Left cardiac atrium (tissue), 4 donors: ENCODE measurements at regions of chr6 and their contacts with region 1.

Region 1: GRCh38 chr6:105484238-105485161 is 81.6 kb upstream of the PREP start:
- DNase-seq: no peak
- ATAC-seq: peak; percentile 39 to 58

Region 2: GRCh38 chr6:105077596-105078385 is 406.7 kb before region 1 on chr6:
- intact Hi-C with region 1: no loop called
- DNase-seq: no peak
- ATAC-seq: no peak

Region 3: GRCh38 chr6:105301072-105301503 is 183.4 kb before region 1 on chr6:
- intact Hi-C with region 1: no loop called
- DNase-seq: peak; percentile 26
- ATAC-seq: peak; percentile 91 to 92

Region 4: DNA sequence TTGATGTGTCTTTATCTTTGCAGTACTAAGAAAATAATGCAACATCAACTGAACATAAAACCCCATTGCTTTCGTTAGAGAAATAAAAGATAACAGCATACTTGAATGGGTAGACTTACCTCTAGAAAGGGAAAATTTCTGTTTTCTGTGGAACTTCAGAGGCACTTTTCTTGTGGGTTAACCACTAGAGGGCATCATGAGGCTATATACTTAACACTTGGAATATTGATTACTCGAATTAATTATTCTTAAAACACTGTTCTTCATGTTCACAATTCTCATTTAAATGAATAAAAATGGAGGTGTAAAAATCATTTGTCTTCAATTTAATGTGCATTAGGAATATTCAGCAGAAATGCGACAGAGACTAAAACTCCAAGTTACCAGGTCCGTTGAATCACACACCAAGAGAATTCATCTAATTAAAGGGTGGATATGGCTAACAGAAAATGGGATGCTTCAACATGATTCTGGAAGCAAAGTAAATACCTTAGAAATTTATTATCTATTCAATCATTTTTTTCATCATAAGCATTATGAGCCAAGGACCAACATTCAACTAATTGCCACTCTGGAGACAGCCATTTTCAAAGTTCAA is 249.2 kb after region 1 on chr6:
- intact Hi-C with region 1: loop called in 1 of 2 experiments (anchors 10 kb)
- DNase-seq: no peak
- ATAC-seq: no peak

Region 5: GRCh38 chr6:105992315-105992961 is 507.9 kb after region 1 on chr6:
- intact Hi-C with region 1: loop called in 1 of 2 experiments (anchors 5 kb)
- DNase-seq: peak; percentile 80
- ATAC-seq: peak; percentile 92 to 97

Region 6: DNA sequence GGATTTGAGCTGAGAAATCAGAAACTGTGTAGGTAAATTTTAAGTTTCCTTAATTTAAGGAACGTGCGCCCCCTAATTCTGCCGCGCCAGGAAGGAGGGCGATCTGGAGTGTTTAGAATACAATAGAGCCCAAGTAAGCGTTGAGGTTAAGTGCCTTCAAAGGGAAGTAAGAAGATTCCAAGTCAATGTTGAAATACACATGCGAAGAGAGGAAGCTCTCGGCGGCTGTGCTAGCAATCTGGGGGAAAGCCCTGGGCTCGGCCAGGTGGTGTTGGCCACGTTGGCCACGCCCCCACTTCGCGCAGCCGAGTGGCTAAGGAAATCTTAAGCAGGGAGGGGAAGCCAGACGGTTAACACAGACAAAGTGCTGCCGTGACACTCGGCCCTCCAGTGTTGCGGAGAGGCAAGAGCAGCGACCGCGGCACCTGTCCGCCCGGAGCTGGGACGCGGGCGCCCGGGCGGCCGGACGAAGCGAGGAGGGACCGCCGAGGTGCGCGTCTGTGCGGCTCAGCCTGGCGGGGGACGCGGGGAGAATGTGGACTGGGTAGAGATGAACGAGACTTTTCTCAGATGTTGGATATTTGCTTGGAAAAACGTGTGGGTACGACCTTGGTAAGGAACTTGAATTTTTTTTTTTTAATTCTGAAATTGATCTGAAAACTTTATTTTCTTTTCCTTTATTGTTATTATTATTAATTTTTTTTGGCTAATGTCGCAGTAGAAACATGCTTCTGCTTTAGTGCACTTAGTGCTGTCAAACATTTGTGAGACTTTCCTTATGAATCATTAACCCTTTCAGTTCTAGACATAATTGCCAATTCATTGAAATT is 601.7 kb after region 1 on chr6 and contains the start of gene PRDM1:
- intact Hi-C with region 1: loop called in 1 of 2 experiments (anchors 5 kb)
- DNase-seq: peak; percentile 74
- ATAC-seq: peak; percentile 73 to 82
- total RNA-seq, gene PRDM1: 1.1 to 2.3 TPM

Region 7: GRCh38 chr6:106223300-106223930 is 738.9 kb after region 1 on chr6:
- intact Hi-C with region 1: loop called in 1 of 2 experiments (anchors 5 kb)
- DNase-seq: peak; percentile 43
- ATAC-seq: peak in 1 of 2 donors; percentile 57

Region 8: DNA sequence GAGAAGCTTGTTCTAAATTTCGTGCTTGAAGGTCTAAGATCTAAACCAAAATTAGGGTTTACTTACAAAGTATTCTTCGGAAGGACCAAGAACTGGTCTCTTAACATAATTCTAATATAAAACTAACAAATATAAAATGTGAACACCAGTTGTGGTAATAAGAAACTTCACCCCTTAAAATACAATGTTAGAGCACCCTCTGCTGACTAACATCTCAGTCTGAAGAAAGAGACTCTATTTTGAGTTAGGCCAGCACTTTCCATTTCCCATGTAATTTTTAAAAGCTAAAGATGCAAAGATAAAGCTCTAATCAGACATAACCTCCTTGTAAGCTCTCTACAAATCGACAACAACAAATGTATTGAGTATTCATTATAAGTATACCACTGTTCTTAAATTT is 816.4 kb after region 1 on chr6:
- intact Hi-C with region 1: loop called in 1 of 2 experiments (anchors 5 kb)
- DNase-seq: no peak
- ATAC-seq: no peak